ENCODE measurements at regions of chr2 and their contacts with region 1.

Region 1: GRCh38 chr2:134232868-134233727 is 20.8 kb upstream of the MGAT5 start:
- DNase-seq: no peak
- H3K4me3 Mint-ChIP-seq: peak overlapping the region; percentile 53
- H3K27ac Mint-ChIP-seq: peak overlapping the region; percentile 64
- H3K4me1 Mint-ChIP-seq: peaks cover 70% of the 10 kb centered on the region
- H3K27me3 Mint-ChIP-seq: peaks cover 2% of the 10 kb centered on the region

Region 2: GRCh38 chr2:134197445-134197844 is 35.7 kb before region 1 on chr2:
- intact Hi-C with region 1: loop called (anchors 1 kb)
- DNase-seq: no peak
- H3K4me3 Mint-ChIP-seq: no peak overlapping the region
- H3K27ac Mint-ChIP-seq: peak overlapping the region; percentile 59
- H3K4me1 Mint-ChIP-seq: peaks cover 25% of the 10 kb centered on the region
- H3K27me3 Mint-ChIP-seq: no peaks in the 10 kb centered on the region

Region 3: GRCh38 chr2:134245340-134245984 is 12.4 kb after region 1 on chr2:
- intact Hi-C with region 1: loop called (anchors 1 kb)
- DNase-seq: peak; percentile 54
- H3K4me3 Mint-ChIP-seq: no peak overlapping the region
- H3K27ac Mint-ChIP-seq: no peak overlapping the region
- H3K4me1 Mint-ChIP-seq: peaks cover 51% of the 10 kb centered on the region
- H3K27me3 Mint-ChIP-seq: peaks cover 12% of the 10 kb centered on the region

Region 4: DNA sequence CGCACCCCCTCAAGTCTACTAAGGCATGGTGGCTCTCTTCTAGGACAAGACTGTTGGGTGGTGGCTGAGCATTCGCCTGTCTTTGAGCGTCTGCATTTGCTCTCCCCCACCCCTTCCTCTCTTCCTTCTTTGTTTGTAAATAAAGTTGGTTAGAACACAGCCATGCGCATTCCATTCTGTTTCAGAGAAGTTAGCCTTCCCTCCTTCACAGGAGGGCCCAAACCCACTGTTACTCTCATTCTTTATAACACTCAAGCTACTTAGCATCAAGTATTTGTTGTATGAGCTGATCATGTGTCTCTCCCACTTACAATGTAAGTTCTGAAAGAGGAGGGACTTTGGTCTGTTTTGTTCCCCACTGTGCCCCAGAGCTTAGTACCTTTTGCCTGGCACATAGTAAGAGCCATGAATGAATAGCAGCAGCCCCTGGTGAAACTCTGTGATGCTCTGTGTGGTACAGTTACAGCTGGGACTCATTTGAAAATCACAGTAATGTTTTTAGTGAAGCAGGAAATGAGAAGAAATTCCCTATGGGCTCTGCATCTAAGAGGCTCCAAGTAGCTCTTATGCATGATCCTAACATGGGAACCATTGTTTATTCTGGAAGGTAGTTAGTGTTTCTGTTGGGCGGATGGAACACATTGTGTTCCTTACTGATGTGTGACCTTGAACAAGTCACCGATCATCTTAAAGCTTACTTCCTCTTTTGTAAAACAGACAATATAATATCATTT is 28.5 kb after region 1 on chr2:
- intact Hi-C with region 1: no loop called
- DNase-seq: no peak
- H3K4me3 Mint-ChIP-seq: no peak overlapping the region
- H3K27ac Mint-ChIP-seq: no peak overlapping the region
- H3K4me1 Mint-ChIP-seq: peaks cover 41% of the 10 kb centered on the region
- H3K27me3 Mint-ChIP-seq: peaks cover 15% of the 10 kb centered on the region

Region 5: GRCh38 chr2:134290358-134290757 is 57.3 kb after region 1 on chr2:
- intact Hi-C with region 1: loop called (anchors 1 kb)
- DNase-seq: peak; percentile 9
- H3K4me3 Mint-ChIP-seq: no peak overlapping the region
- H3K27ac Mint-ChIP-seq: no peak overlapping the region
- H3K4me1 Mint-ChIP-seq: peaks cover 26% of the 10 kb centered on the region
- H3K27me3 Mint-ChIP-seq: peaks cover 10% of the 10 kb centered on the region

Measured in activated T-helper 1 cell treated with anti-CD3 and anti-CD28 coated beads, Interleukin-12 subunit alpha, Interleukin-12 subunit beta, Interleukin-2, Interleukin-4 antibody, amounts not matched to agents 30 ng/mL and 10 ng/mL and 1 ng/mL, durations not matched to agents 14 hours and 24 hours and 36 hours (primary cell).